ENCODE measurements at regions of chr2 and their contacts with region 1.

Region 1: DNA sequence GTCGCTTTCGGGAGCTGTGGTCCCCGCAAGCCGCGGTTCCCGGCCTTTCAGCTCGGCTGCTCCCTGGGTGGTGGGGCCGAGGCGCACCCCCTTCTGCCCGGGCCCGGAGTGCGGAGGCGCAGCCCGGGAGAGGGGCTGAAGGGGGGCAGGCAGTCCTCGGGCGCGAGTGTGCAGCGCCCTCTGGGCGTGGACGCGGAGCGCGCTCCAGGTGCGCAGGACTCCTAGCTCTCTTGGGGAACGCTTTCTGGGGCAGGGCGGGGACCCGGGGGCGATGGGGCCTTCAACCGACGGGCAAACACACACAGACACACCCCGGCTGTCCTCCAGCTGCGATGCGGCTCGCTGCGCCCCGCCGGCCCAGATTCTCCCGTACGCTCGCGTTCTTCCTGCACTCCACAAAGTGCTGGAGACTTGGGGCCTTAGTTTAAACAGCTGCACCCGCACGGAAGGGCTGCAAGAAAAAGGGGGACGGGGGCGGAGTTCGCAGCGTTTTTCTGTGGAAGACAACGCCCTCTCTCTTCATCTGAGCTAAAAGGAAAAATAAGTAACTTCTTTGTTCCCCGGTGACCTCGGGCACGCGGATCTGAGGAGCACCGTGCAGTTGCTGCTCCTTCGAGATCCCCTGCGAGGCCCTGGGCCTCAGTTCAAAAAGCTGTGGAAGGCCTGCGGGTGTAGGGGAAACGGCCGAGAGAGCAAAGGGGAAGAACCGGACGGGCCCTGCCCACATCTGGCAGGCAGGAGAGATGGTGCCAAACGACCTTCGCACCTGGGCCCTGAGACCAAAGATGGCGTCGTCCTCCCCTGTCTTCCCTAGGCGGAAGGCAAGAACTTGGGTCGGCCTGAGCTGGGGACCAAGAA is 593 bp upstream of the SDC1 start:
- DNase-seq: peak; percentile 44
- H3K4me3 Mint-ChIP-seq: peak overlapping the region; percentile 55
- H3K27ac Mint-ChIP-seq: no peak overlapping the region
- H3K4me1 Mint-ChIP-seq: peaks cover 6% of the 10 kb centered on the region
- H3K27me3 Mint-ChIP-seq: peaks cover 41% of the 10 kb centered on the region

Region 2: DNA sequence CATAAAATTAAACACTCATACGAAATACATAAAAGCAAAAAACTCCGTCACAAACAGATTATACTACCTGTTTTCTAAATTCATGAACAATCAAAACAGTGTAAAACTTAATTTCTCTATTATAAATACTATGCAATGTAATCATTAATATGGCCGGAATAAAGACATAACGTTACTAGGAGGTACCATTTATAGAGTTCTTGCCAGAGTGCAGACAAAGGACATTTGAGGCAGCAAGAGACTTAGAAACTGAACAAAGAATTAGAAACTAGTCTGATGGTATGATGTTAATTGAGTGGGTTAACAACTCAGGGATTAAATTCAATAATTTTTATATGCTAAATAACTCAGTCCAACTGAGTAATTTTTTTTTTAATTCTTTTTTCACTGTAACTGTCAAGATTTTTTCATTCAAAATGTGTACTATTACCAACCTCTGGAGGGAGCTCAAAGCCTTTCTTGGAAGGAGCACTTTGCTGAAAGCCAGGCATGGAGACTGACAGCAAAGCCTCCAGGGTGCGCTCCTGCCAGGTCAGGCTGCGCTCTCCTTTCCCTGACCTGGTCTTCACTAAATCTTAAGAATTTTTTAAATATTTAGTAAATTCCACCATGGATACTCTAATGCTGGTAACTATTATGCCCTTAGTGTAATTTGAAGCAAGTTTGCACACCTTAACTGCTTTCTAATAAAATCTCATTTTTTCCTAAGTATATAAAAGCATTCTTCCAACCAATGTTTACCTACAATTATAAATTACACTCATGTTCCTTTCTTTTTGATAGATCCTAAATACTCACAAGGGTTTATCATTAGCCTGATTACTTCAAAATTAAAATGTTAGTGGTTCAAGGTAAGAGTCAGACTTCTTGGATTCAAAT is 269.7 kb before region 1 on chr2:
- CTCF ChIA-PET with region 1: no interaction called
- intact Hi-C with region 1: loop called (anchors 1 kb)
- DNase-seq: peak; percentile 68
- H3K4me3 Mint-ChIP-seq: no peak overlapping the region
- H3K27ac Mint-ChIP-seq: no peak overlapping the region
- H3K4me1 Mint-ChIP-seq: no peaks in the 10 kb centered on the region
- H3K27me3 Mint-ChIP-seq: no peaks in the 10 kb centered on the region

Region 3: GRCh38 chr2:20103514-20104112 is 121.9 kb before region 1 on chr2:
- CTCF ChIA-PET with region 1: interaction called, 5 read pairs
- intact Hi-C with region 1: loop called (anchors 2 kb)
- DNase-seq: no peak
- H3K4me3 Mint-ChIP-seq: no peak overlapping the region
- H3K27ac Mint-ChIP-seq: no peak overlapping the region
- H3K4me1 Mint-ChIP-seq: no peaks in the 10 kb centered on the region
- H3K27me3 Mint-ChIP-seq: peaks cover 23% of the 10 kb centered on the region

Region 4: DNA sequence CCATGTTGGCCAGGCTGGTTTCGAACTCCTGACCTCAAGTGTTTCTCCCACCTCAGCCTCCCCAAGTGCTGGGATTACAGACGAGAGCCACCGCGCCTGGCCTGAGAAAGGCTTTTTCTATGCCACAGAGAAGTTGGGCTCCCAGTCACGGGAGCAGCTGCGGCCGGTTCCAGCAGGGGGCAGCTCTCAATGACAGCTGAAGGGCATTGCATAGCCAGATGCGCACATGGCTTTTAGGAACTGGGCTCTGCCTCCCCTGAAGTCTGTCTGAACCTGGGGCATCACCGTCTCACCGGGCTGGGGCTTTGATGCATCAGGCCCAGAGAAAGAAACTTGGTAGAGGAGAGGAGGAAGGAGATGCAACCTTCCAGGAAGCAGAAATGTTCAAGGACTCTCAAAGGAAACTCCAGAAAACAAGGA is 89.9 kb before region 1 on chr2:
- CTCF ChIA-PET with region 1: interaction called, 3 read pairs
- intact Hi-C with region 1: loop called (anchors 1 kb)
- DNase-seq: peak; percentile 50
- H3K4me3 Mint-ChIP-seq: no peak overlapping the region
- H3K27ac Mint-ChIP-seq: no peak overlapping the region
- H3K4me1 Mint-ChIP-seq: no peaks in the 10 kb centered on the region
- H3K27me3 Mint-ChIP-seq: peaks cover 8% of the 10 kb centered on the region

Measured in activated naive CD4-positive, alpha-beta T cell treated with anti-CD3 and anti-CD28 coated beads for 36 hours (primary cell).